Activated T-helper 2 cell treated with anti-CD3 and anti-CD28 coated beads, Interferon-gamma antibody, Interleukin-2, Interleukin-4, amounts not matched to agents 10 μg/mL and 5 μg/mL and 100 μg/mL, durations not matched to agents 14 hours and 24 hours and 36 hours (primary cell): ENCODE measurements at regions of chr1 and their contacts with region 1.

Region 1: GRCh38 chr1:28886731-28887418 is 27.5 kb upstream of the EPB41 start:
- DNase-seq: peak; percentile 89
- H3K4me3 Mint-ChIP-seq: peak overlapping the region; percentile 83
- H3K27ac Mint-ChIP-seq: peak overlapping the region; percentile 92
- H3K4me1 Mint-ChIP-seq: peaks cover 45% of the 10 kb centered on the region
- H3K27me3 Mint-ChIP-seq: no peaks in the 10 kb centered on the region

Region 2: DNA sequence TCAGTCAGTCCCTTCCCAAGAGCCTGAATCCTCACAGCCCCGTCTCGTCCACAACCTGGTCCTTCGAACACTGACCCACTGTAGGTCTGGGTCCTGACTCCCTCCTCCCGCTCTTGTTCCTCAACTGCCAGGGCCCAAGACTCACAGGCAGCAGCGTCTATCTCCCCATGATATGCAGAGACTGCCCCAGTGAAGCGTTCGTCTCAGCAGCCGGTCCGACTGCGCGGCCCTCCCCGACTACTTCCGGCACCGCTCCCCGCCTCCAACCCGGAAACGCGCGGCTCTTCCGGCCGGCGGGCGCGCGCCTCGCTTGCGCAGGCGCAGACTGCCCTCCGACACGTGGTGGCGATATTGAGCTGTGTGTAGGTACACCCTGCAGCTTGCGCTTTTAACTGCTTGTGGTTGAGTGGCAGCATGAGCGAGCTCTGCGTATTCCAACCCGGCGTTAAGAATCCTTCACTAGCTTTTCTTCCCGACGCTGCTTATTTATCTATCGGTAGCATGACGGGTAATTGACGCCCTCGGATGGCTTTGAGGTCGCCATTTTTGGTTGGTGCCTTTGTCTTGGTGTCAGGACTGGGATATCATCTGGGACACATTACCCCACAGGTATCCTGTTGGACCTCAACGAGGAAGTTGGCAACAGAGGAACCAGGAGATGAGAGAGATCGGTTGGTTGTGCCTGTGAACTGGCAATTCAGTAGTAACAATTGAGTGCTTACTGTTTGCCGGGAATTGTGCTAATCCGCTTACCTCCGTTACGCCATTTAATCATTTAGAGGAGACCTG is 243.8 kb before region 1 on chr1 and contains the start of gene TAF12:
- intact Hi-C with region 1: loop called (anchors 5 kb)
- DNase-seq: peak; percentile 88
- H3K4me3 Mint-ChIP-seq: peak within 1 kb of the TSS; percentile 99
- H3K27ac Mint-ChIP-seq: peak within 1 kb of the TSS; percentile 97
- H3K4me1 Mint-ChIP-seq: peaks cover 37% of the 10 kb centered on the region
- H3K27me3 Mint-ChIP-seq: no peaks in the 10 kb centered on the region
- total RNA-seq, gene TAF12: 30.8 and 32.0 TPM in 2 replicates

Region 3: GRCh38 chr1:28926629-28927265 is 39.9 kb after region 1 on chr1:
- intact Hi-C with region 1: loop called (anchors 1 kb)
- DNase-seq: peak; percentile 49
- H3K4me3 Mint-ChIP-seq: peak overlapping the region; percentile 52
- H3K27ac Mint-ChIP-seq: peak overlapping the region; percentile 77
- H3K4me1 Mint-ChIP-seq: peaks cover 38% of the 10 kb centered on the region
- H3K27me3 Mint-ChIP-seq: no peaks in the 10 kb centered on the region

Region 4: GRCh38 chr1:29062157-29062942 is 175.5 kb after region 1 on chr1:
- intact Hi-C with region 1: loop called (anchors 1 kb)
- DNase-seq: no peak
- H3K4me3 Mint-ChIP-seq: peak overlapping the region; percentile 35
- H3K27ac Mint-ChIP-seq: peak overlapping the region; percentile 91
- H3K4me1 Mint-ChIP-seq: peaks cover 31% of the 10 kb centered on the region
- H3K27me3 Mint-ChIP-seq: no peaks in the 10 kb centered on the region

Region 5: DNA sequence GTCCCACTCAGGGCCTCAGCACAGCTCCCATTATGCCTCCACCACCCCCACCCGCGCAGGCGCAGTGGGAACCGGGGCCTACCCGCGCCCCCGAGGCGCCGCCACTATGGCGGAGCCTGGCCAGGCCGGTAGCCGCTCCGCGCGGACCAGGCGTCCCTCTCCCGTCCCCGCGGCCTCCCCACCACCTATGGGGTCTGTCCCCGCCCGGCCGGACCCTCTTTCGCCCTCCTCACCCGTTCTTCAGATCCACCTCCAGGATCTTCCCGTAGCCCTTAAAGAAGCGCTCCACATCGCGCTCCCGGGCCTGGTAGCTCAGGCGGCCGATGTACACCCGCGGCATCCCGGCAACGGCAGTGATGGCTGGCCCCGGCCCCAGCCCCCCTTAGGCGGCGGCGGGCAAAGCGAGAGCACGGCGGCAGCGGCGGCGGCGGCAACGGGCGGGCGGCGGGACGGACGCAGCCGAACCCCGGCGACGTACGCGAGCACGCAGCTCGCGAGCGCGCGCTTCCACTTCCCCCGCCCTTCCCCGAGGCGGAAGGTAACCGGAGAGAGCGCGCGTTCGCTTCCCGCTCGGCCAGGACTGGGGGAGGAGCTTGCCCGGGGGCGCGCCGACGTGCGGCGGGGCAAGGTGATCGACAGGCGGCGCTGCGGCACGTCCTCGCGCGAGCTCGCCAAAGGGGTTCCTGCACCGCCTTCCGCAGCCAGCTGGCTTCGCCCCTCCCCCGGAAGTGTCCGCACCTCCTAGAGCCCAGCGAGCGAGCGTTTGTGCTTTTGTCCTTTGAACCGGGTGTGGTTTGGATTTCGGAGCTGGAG is 294.7 kb after region 1 on chr1 and contains the start of gene SRSF4:
- intact Hi-C with region 1: loop called (anchors 1 kb)
- DNase-seq: peak; percentile 99
- H3K4me3 Mint-ChIP-seq: peak within 1 kb of the TSS; percentile 97
- H3K27ac Mint-ChIP-seq: peak within 1 kb of the TSS; percentile 97
- H3K4me1 Mint-ChIP-seq: peaks cover 44% of the 10 kb centered on the region
- H3K27me3 Mint-ChIP-seq: no peaks in the 10 kb centered on the region
- total RNA-seq, gene SRSF4: 145 TPM in 2 replicates

Region 6: GRCh38 chr1:29202584-29203340 is 315.9 kb after region 1 on chr1:
- intact Hi-C with region 1: loop called (anchors 1 kb)
- DNase-seq: peak; percentile 78
- H3K4me3 Mint-ChIP-seq: no peak overlapping the region
- H3K27ac Mint-ChIP-seq: peak overlapping the region; percentile 70
- H3K4me1 Mint-ChIP-seq: peaks cover 16% of the 10 kb centered on the region
- H3K27me3 Mint-ChIP-seq: no peaks in the 10 kb centered on the region